GM10248 (cell line): ENCODE measurements at regions of chr12 and their contacts with region 1.

Region 1: GRCh38 chr12:102879144-102879763 is 37.8 kb downstream of the PAH start:
- DNase-seq: peak; percentile 45
- CTCF ChIP-seq: peak; percentile 62

Region 2: DNA sequence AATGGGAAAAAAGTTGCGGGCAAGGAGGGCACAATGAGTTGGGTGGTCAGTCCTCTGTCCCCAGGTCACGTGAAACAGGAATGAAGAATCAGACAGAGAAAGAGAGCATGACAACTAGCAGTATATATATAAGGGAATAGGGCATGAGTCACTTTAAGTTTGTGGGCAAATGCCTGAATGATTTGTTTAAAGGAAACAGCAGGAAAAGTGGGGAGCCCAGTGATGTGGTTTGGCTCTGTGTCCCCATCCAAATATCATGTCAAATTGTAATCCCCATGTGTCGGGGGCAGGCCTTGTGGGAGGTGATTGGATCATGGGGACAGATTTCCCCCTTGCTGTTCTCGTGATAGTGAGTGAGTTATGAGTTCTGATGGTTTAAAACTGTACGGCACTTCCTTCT is 203.6 kb before region 1 on chr12:
- CTCF ChIA-PET with region 1: no interaction called
- POLR2A ChIA-PET with region 1: no interaction called
- DNase-seq: no peak
- CTCF ChIP-seq: no peak

Region 3: GRCh38 chr12:102702447-102703114 is 176.7 kb before region 1 on chr12:
- CTCF ChIA-PET with region 1: no interaction called
- POLR2A ChIA-PET with region 1: no interaction called
- DNase-seq: peak; percentile 56
- CTCF ChIP-seq: peak; percentile 16

Region 4: DNA sequence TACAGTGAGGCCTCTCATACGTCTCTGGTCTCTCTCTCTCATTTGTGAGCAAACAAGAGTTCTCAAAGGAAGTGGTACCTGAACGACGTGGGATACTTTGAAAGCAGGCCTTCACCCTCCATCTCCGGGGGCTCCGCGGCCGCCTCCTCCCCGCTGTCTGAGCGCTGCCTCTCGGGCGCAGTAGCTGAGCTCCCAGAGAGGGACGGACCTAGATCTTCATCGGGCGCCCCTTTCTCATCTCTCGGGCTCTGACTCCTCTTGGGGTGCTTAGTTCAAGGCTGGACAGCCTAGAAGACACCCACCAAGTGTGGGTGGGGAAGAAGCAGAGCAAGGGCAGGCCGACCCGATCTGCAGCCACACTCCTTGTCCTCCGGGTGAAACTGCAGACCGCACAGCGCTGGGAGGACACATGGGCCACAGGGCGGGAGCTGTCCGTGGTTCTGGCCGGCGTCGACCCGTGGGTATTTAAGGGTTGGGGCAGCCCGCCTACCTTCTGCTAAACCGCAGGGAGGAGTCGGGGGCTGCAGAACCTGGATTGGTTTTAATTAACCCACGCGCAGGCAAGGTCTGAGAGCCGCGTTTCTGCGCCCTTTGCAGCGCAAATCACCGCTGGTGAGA is 54.9 kb before region 1 on chr12:
- CTCF ChIA-PET with region 1: no interaction called
- POLR2A ChIA-PET with region 1: no interaction called
- DNase-seq: peak; percentile 31
- CTCF ChIP-seq: no peak

Region 5: DNA sequence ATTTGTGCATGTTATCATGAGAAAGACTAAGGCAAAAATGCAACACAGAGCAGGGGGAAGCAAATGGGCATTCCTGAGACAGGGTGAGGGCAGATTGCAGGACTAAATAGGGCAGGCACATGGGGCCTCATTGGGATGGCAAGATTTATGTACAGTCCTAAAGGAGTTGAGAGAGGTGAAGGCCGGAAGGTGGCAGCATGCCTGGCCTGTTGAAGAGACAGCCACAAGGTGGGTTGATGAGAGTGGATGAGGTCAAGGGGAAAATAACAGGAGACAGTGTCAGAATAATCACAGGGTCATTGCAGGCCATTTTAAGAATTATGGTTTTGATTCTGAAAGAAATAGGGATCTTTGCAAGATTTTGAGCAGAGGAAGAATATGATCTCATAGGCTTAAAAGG is 16.8 kb after region 1 on chr12:
- CTCF ChIA-PET with region 1: interaction called, 24 read pairs
- POLR2A ChIA-PET with region 1: no interaction called
- DNase-seq: no peak
- CTCF ChIP-seq: no peak

Region 6: GRCh38 chr12:102939670-102940222 is 60.5 kb after region 1 on chr12:
- CTCF ChIA-PET with region 1: interaction called, 12 read pairs
- POLR2A ChIA-PET with region 1: no interaction called
- DNase-seq: no peak
- CTCF ChIP-seq: no peak

Region 7: GRCh38 chr12:103093499-103094106 is 214.3 kb after region 1 on chr12:
- CTCF ChIA-PET with region 1: no interaction called
- POLR2A ChIA-PET with region 1: no interaction called
- DNase-seq: no peak
- CTCF ChIP-seq: no peak

Region 8: GRCh38 chr12:103523771-103524170 is 644.5 kb after region 1 on chr12:
- CTCF ChIA-PET with region 1: interaction called, 15 read pairs
- POLR2A ChIA-PET with region 1: no interaction called
- DNase-seq: no peak
- CTCF ChIP-seq: no peak